Activated CD4-positive, alpha-beta memory T cell treated with anti-CD3 and anti-CD28 coated beads, Interleukin-2, amount 10 ng/mL, durations not matched to agents 7 days and 5 days (primary cell): ENCODE measurements at regions of chr2 and their contacts with region 1.

Region 1: GRCh38 chr2:73233154-73233931 is at the start of gene PRADC1:
- DNase-seq: peak; percentile 97
- H3K4me3 Mint-ChIP-seq: peak within 1 kb of the TSS; percentile 86
- H3K27ac Mint-ChIP-seq: peak within 1 kb of the TSS; percentile 75
- H3K4me1 Mint-ChIP-seq: peaks cover 35% of the 10 kb centered on the region
- H3K27me3 Mint-ChIP-seq: no peaks in the 10 kb centered on the region
- total RNA-seq, gene PRADC1: 10.1 to 10.7 TPM

Region 2: GRCh38 chr2:73212448-73213176 is 20.7 kb before region 1 on chr2:
- CTCF ChIA-PET with region 1: interaction called, 50 read pairs
- POLR2A ChIA-PET with region 1: interaction called, 18 read pairs
- DNase-seq: peak; percentile 78
- H3K4me3 Mint-ChIP-seq: no peak overlapping the region
- H3K27ac Mint-ChIP-seq: no peak overlapping the region
- H3K4me1 Mint-ChIP-seq: peaks cover 31% of the 10 kb centered on the region
- H3K27me3 Mint-ChIP-seq: peaks cover 6% of the 10 kb centered on the region

Region 3: GRCh38 chr2:73257425-73258125 is 24.2 kb after region 1 on chr2:
- CTCF ChIA-PET with region 1: no interaction called
- POLR2A ChIA-PET with region 1: interaction called, 22 read pairs
- DNase-seq: no peak
- H3K4me3 Mint-ChIP-seq: no peak overlapping the region
- H3K27ac Mint-ChIP-seq: no peak overlapping the region
- H3K4me1 Mint-ChIP-seq: no peaks in the 10 kb centered on the region
- H3K27me3 Mint-ChIP-seq: no peaks in the 10 kb centered on the region

Region 4: DNA sequence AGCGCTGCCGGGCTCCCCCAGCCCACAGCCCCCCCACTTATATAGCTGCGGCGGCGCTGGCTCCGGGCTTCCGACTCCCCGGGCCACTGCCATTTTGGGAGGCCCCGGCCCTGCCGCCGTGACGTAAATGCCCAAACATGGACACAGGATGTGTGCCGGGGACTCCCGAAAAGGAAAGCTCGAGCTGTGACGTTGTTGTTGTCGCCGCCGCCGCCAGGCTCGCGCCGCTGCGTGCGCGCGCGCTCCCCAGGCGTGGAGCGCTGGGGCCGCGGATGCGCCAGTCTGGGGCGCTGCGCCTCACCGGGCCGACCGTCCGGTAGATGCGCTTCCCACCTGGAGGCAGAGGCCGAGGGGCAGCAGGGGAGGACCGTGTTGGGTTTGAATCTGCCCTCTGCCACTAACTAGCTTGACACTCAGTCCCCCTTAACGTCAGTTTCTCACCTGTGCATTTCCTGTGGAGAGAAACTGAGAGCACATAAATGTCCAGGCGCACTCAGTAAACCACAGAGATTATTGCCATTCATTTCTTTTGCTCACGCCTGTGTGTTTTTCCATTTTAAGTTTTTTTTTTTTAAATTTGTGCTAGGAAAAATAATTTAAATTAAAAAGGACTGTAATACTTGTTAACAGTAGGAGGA is 60.3 kb after region 1 on chr2 and contains the start of gene EGR4:
- CTCF ChIA-PET with region 1: interaction called, 15 read pairs
- POLR2A ChIA-PET with region 1: interaction called, 14 read pairs
- DNase-seq: peak; percentile 92
- H3K4me3 Mint-ChIP-seq: peak within 1 kb of the TSS; percentile 69
- H3K27ac Mint-ChIP-seq: no peak within 1 kb of the TSS
- H3K4me1 Mint-ChIP-seq: peaks cover 16% of the 10 kb centered on the region
- H3K27me3 Mint-ChIP-seq: peaks cover 84% of the 10 kb centered on the region
- total RNA-seq, gene EGR4: not detected

Region 5: DNA sequence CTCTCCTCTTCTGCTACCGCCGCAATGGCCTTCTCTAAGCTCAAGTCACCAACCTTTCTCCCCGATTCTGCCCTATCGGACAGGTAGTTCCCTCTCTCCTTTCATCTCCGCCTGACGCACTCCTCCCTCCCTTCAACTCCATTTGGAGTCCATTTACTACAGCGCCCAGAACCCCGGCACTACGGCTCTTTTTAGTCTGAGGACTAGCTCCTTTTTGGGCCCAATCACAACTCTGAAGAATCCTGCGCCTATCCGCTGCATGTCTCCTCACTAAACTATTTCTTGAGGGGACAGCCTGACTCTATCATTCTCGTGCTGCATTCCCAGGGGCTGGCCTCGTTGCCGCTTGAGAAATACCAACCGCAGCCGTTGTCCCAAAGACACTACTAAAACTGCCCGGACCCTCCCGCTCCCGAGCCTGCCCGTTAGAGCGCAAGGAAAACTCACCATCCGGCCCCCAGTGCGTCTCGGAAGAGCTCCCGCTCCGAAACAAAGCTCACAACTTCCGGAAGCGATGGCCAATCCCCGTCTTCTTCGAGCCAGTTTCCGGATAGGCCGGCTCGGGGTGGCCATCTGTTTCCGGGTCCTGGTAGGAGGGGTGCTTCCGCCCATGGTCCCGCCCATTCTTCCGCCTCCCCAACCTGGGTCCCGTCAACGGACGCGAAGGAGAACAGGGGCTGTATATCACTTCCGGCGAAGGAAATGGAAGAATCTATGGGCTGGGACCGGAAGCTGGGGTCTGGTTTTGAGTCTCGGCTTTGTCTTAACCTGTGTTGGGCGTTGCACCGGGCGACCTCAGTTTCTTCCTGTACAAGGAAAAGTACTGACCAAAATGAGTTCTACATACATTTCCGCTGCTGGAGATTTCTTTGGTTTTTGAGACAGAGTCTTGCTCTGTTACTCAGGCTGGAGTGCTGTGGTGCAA is 503.8 kb after region 1 on chr2 and contains the start of gene TPRKB:
- CTCF ChIA-PET with region 1: no interaction called
- POLR2A ChIA-PET with region 1: interaction called, 11 read pairs
- DNase-seq: peak; percentile 98
- H3K4me3 Mint-ChIP-seq: peak within 1 kb of the TSS; percentile 97
- H3K27ac Mint-ChIP-seq: peak within 1 kb of the TSS; percentile 91
- H3K4me1 Mint-ChIP-seq: peaks cover 20% of the 10 kb centered on the region
- H3K27me3 Mint-ChIP-seq: no peaks in the 10 kb centered on the region
- total RNA-seq, gene TPRKB: 32.9 TPM